ENCODE measurements at regions of chr12 and their contacts with region 1.

Region 1: DNA sequence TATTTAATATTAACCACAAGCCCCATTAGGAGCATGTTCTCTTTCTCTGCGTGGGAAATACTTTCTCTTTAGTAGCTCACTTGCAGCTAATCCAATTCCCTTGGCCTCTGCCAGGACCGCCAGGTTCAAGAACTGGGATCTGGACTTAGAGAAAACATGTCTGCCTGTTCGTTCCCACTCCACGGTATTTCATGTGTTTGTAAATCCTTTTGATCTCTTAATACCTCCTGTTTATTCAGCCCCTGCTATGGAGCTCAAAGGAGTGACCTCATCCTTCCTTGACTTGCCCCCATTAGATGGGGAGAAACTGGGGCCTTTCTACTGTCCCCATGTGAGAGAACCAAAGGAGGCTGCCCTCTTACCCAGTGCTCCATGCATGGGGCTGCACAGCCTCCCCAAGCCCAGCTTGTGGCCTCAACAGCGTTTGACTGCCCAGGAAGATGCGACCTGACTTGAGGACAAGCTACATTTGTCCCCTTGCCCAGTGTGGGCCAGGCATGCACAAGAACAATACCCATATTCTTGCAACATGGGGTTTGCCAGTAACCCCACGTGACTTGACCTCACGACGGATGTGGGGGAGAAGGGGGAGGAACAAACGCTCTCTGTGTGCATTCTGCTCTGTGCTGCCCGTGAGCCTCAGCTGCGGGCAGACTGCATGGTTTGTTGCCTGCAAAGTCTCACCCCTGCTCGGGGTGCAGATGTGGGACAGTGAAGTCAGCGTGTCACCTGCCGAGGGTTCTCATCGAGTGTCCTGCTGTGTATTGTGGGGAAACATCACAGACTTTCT is 30.3 kb downstream of the CD9 start:
- DNase-seq: peak; percentile 54 to 77
- ATAC-seq: peak; percentile 28 to 53 (median 42)
- H3K4me3 ChIP-seq: peak overlapping the region; percentile 28
- H3K27ac ChIP-seq: peak overlapping the region; percentile 84
- H3K4me1 ChIP-seq: peaks cover 79% of the 10 kb centered on the region
- H3K27me3 ChIP-seq: no peaks in the 10 kb centered on the region
- CTCF ChIP-seq: no peak

Region 2: GRCh38 chr12:4506870-4507269 is 1723.6 kb before region 1 on chr12:
- intact Hi-C with region 1: loop called in 1 of 2 experiments (anchors 10 kb)
- DNase-seq: no peak
- ATAC-seq: no peak
- H3K4me3 ChIP-seq: no peak overlapping the region
- H3K27ac ChIP-seq: no peak overlapping the region
- H3K4me1 ChIP-seq: peaks cover 16% of the 10 kb centered on the region
- H3K27me3 ChIP-seq: no peaks in the 10 kb centered on the region
- CTCF ChIP-seq: no peak

Region 3: GRCh38 chr12:6195665-6196535 is 34.6 kb before region 1 on chr12:
- intact Hi-C with region 1: loop called (anchors 1 to 5 kb)
- DNase-seq: peak; percentile 83 to 90
- ATAC-seq: peak; percentile 86 to 93 (median 88)
- H3K4me3 ChIP-seq: no peak overlapping the region
- H3K27ac ChIP-seq: peak overlapping the region; percentile 41
- H3K4me1 ChIP-seq: peaks cover 11% of the 10 kb centered on the region
- H3K27me3 ChIP-seq: no peaks in the 10 kb centered on the region
- CTCF ChIP-seq: peak; percentile 96